A673 (cell line): ENCODE measurements at regions of chr5 and their contacts with region 1.

Region 1: GRCh38 chr5:36619012-36619635 is 12.7 kb downstream of the SLC1A3 start:
- DNase-seq: no peak
- H3K4me3 ChIP-seq: no peak overlapping the region
- H3K27ac ChIP-seq: no peak overlapping the region
- H3K4me1 ChIP-seq: peaks cover 6% of the 10 kb centered on the region
- H3K27me3 ChIP-seq: no peaks in the 10 kb centered on the region
- CTCF ChIP-seq: no peak

Region 2: GRCh38 chr5:36363101-36363500 is 256.0 kb before region 1 on chr5:
- CTCF ChIA-PET with region 1: no interaction called
- POLR2A ChIA-PET with region 1: no interaction called
- intact Hi-C with region 1: no loop called
- DNase-seq: no peak
- H3K4me3 ChIP-seq: no peak overlapping the region
- H3K27ac ChIP-seq: no peak overlapping the region
- H3K4me1 ChIP-seq: no peaks in the 10 kb centered on the region
- H3K27me3 ChIP-seq: no peaks in the 10 kb centered on the region
- CTCF ChIP-seq: no peak

Region 3: GRCh38 chr5:36397901-36398536 is 221.1 kb before region 1 on chr5:
- CTCF ChIA-PET with region 1: no interaction called
- POLR2A ChIA-PET with region 1: no interaction called
- intact Hi-C with region 1: no loop called
- DNase-seq: peak; percentile 72
- H3K4me3 ChIP-seq: no peak overlapping the region
- H3K27ac ChIP-seq: no peak overlapping the region
- H3K4me1 ChIP-seq: peaks cover 24% of the 10 kb centered on the region
- H3K27me3 ChIP-seq: no peaks in the 10 kb centered on the region
- CTCF ChIP-seq: peak; percentile 61

Region 4: GRCh38 chr5:36667812-36668211 is 48.7 kb after region 1 on chr5:
- CTCF ChIA-PET with region 1: no interaction called
- POLR2A ChIA-PET with region 1: interaction called, 13 read pairs
- intact Hi-C with region 1: no loop called
- DNase-seq: no peak
- H3K4me3 ChIP-seq: no peak overlapping the region
- H3K27ac ChIP-seq: no peak overlapping the region
- H3K4me1 ChIP-seq: peaks cover 11% of the 10 kb centered on the region
- H3K27me3 ChIP-seq: no peaks in the 10 kb centered on the region
- CTCF ChIP-seq: no peak